Naive thymus-derived CD4-positive, alpha-beta T cell (primary cell): ENCODE measurements at regions of chr1 and their contacts with region 1.

Region 1: GRCh38 chr1:84862810-84863251 is 30.2 kb downstream of the LPAR3 start:
- DNase-seq: peak in 8 of 9 donors; percentile 42 to 81 (median 66)
- ATAC-seq: peak; percentile 87
- H3K4me3 ChIP-seq: peak overlapping the region; percentile 44
- H3K4me3 Mint-ChIP-seq: peak overlapping the region; percentile 71 to 89 (median 83)
- H3K27ac ChIP-seq: peak overlapping the region; percentile 67
- H3K27ac Mint-ChIP-seq: peak overlapping the region; percentile 83 to 95 (median 92)
- H3K4me1 ChIP-seq: peaks cover 30 to 46% of the 10 kb centered on the region in 2 donors
- H3K4me1 Mint-ChIP-seq: peaks cover 31 to 69% (median 59%) of the 10 kb centered on the region in 7 donors
- H3K27me3 ChIP-seq: no peaks in the 10 kb centered on the region
- H3K27me3 Mint-ChIP-seq: peaks cover 0 to 6% (median 0%) of the 10 kb centered on the region in 5 donors

Region 2: DNA sequence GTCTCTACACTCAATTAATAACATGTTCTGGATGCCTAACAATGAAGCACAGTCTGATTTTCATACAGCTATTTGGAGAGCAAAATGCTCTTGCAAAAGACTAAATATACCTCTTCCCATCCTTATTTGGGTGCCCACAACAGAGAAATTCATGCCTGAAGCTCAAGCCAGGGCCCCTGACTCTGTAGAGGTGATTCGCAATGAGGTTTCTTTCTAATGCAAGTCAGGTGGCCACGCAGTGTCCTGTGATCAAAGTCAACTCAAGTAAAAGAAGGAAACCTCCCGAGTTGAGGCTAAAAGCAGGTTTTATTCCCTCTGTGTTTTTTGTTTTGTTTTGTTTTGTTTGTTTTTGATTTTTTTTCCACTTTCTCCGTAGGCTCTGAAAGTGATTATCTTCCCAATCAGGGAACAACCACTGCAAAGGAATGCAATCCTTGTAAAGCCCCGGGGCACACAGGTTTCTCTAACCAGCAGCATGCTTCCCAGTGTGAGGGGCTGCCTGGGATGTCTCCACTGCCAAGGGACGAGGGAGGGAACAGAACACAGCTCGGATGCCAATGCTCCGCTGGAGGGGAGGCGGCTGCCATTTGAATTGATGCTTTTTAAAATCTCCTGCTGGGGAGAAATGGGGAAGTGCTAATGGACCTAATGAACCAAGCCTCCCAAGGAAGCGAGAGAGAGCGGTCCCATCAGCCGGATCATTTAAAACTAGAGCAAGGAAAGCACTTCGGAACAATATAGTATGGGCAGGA is 98.7 kb before region 1 on chr1:
- CTCF ChIA-PET with region 1: no interaction called
- POLR2A ChIA-PET with region 1: no interaction called
- intact Hi-C with region 1: no loop called
- DNase-seq: no peak
- ATAC-seq: no peak
- H3K4me3 ChIP-seq: no peak overlapping the region
- H3K4me3 Mint-ChIP-seq: no peak overlapping the region
- H3K27ac ChIP-seq: no peak overlapping the region
- H3K27ac Mint-ChIP-seq: no peak overlapping the region
- H3K4me1 ChIP-seq: no peaks in the 10 kb centered on the region
- H3K4me1 Mint-ChIP-seq: peaks cover 2 to 4% (median 2%) of the 10 kb centered on the region in 7 donors
- H3K27me3 ChIP-seq: no peaks in the 10 kb centered on the region
- H3K27me3 Mint-ChIP-seq: peaks cover 11 to 56% (median 17%) of the 10 kb centered on the region in 5 donors

Region 3: DNA sequence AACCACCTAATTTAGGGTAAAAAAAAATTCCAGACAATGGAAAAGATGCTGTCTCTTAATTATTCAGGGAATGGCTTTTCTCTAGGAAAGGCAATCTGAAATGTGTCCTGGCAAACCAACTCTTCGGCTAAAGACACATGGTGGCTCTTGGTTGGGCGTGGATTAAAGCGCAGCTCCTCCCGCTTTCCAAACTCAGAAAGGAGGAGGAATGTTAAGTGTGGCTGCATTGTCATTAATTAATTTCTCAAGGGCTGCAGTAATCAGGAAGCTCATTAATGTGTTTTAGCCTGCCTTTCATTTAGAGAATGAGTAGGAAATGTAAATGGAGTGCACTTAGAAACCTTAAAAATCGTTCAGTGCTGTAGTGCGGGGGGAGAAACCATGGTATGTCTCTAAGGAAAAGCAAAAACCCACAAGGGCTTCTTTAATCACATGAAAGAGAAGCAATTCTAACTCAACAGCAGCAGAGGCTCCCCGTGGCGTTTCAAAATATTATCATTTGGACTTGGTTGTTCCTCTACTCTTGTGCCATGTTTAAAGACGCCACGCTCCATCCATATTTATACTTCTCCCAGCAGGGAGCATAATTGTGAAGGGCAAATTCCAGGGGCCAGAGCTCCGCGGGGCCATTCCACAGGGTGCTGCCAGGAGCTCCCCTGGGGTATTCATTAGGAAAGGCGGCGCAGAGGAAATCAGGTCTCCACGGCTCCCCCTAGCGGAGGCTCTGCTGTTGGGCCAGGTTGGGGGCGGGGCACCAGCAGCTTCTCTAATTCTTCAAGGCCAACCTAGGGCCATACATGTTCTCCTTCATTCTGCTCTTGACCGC is 80.7 kb before region 1 on chr1:
- CTCF ChIA-PET with region 1: no interaction called
- POLR2A ChIA-PET with region 1: no interaction called
- intact Hi-C with region 1: loop called in 1 of 2 experiments (anchors 5 kb)
- DNase-seq: peak; percentile 63 to 82 (median 75)
- ATAC-seq: peak; percentile 93
- H3K4me3 ChIP-seq: peak overlapping the region; percentile 23
- H3K4me3 Mint-ChIP-seq: peak overlapping the region; percentile 60 to 89 (median 84)
- H3K27ac ChIP-seq: peak overlapping the region; percentile 26
- H3K27ac Mint-ChIP-seq: peak overlapping the region in 8 of 9 donors; percentile 48 to 88 (median 78)
- H3K4me1 ChIP-seq: peaks cover 0 to 14% of the 10 kb centered on the region in 2 donors
- H3K4me1 Mint-ChIP-seq: peaks cover 17 to 35% (median 30%) of the 10 kb centered on the region in 7 donors
- H3K27me3 ChIP-seq: no peaks in the 10 kb centered on the region
- H3K27me3 Mint-ChIP-seq: peaks cover 0 to 7% (median 0%) of the 10 kb centered on the region in 5 donors

Region 4: DNA sequence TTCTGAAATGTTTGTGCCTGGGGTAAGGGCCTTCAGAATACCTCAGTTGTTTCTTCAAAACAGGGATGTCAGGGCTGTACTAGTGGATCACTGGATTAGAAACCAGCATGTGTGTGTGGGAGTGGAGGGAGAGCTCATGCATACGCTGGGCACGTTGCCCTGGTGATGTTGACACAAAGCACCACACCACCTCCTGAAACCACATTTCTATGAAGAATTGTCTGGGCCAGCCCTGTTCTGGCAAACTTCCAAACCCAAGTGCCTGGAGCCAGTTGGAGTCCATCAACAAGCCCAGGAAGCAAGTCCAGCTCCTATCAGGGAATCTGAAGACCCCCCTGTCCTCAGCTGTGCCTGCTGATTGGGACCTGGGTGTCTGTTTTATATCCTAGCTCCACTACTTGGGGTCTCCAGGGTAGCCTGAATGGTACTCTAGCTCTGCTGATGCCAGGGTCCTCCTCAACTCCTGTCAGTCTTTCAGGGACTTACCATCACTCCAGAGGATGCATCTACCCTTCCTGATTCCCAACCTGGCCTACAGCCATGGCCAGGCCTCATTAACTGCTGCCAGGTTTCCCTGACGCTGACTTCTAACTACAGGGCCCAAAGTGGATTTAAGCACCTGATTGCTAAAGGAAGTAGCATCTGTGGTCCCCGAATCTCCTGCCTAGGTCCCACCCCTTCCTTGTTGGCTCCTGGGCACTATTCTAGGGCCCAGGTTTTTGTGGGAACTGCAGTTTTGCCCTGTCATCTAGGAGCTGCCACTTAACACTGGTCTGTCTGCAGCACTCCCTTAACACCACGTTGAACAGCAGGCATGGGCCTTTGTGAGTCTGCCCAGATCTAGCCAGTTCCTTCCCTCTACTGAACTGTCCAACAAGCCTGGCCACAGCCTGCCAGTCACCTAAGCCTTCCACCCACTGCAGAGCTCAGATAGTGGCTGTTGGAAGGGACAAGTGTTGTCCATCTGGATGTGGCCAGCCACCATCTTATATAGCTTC is 15.3 kb before region 1 on chr1:
- CTCF ChIA-PET with region 1: no interaction called
- POLR2A ChIA-PET with region 1: no interaction called
- intact Hi-C with region 1: loop called in 1 of 2 experiments (anchors 2 kb)
- DNase-seq: no peak
- ATAC-seq: peak; percentile 40
- H3K4me3 ChIP-seq: no peak overlapping the region
- H3K4me3 Mint-ChIP-seq: peak overlapping the region in 4 of 10 donors; percentile 11 to 25 (median 17)
- H3K27ac ChIP-seq: no peak overlapping the region
- H3K27ac Mint-ChIP-seq: peak overlapping the region in 4 of 9 donors; percentile 25 to 79 (median 42)
- H3K4me1 ChIP-seq: peaks cover 6 to 10% of the 10 kb centered on the region in 2 donors
- H3K4me1 Mint-ChIP-seq: peaks cover 5 to 25% (median 19%) of the 10 kb centered on the region in 7 donors
- H3K27me3 ChIP-seq: no peaks in the 10 kb centered on the region
- H3K27me3 Mint-ChIP-seq: peaks cover 0 to 19% (median 0%) of the 10 kb centered on the region in 5 donors

Region 5: DNA sequence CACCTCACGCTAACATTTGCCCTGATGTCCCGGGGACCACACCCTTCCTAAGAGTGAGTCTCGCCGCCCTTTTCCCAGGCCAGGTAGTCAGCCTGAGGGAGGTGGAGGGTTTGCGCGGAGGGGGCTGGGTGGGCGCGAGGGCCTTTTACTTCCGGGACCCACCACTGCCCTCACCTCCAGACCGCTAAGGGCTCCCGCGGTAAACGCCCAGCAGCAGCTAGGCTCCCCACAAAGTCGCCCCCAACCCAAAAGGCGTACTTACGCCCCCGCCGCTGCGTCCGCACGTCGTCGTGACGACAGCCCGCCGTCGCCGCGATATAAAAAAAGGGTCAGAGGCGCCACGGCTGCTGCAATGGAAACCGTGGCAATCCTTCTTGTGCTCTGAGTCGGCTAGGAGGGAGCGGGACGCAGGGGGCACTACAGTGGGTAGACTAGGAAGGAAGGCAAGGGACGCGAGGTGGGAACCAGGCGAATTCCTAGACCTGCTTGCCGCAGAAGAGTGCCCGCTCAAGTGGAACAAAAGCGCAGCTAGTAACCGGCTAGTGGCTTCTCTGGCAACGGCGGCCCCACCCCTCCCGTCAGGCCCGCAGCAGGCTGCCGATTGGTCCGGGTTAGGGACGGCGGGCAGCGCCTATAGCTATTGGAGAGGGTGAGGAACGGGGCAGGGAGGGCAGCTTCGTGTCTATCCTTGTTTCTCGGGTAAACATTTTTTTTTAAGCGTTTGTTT is 1533.1 kb after region 1 on chr1 and contains the start of gene ODF2L:
- CTCF ChIA-PET with region 1: no interaction called
- POLR2A ChIA-PET with region 1: no interaction called
- intact Hi-C with region 1: loop called in 1 of 2 experiments (anchors 10 kb)
- DNase-seq: peak; percentile 73 to 92 (median 90)
- ATAC-seq: peak; percentile 100
- H3K4me3 ChIP-seq: peak within 1 kb of the TSS; percentile 80
- H3K4me3 Mint-ChIP-seq: peak within 1 kb of the TSS; percentile 90 to 100 (median 98)
- H3K27ac ChIP-seq: peak within 1 kb of the TSS; percentile 90
- H3K27ac Mint-ChIP-seq: peak within 1 kb of the TSS; percentile 94 to 99 (median 98)
- H3K4me1 ChIP-seq: peaks cover 17 to 20% of the 10 kb centered on the region in 2 donors
- H3K4me1 Mint-ChIP-seq: peaks cover 23 to 70% (median 58%) of the 10 kb centered on the region in 7 donors
- H3K27me3 ChIP-seq: no peaks in the 10 kb centered on the region
- H3K27me3 Mint-ChIP-seq: peaks cover 0 to 7% (median 0%) of the 10 kb centered on the region in 5 donors
- total RNA-seq, gene ODF2L: 50.3 to 75.3 (median 52.2) TPM